AG04450 (cell line): ENCODE measurements at regions of chr17 and their contacts with region 1.

Region 1: DNA sequence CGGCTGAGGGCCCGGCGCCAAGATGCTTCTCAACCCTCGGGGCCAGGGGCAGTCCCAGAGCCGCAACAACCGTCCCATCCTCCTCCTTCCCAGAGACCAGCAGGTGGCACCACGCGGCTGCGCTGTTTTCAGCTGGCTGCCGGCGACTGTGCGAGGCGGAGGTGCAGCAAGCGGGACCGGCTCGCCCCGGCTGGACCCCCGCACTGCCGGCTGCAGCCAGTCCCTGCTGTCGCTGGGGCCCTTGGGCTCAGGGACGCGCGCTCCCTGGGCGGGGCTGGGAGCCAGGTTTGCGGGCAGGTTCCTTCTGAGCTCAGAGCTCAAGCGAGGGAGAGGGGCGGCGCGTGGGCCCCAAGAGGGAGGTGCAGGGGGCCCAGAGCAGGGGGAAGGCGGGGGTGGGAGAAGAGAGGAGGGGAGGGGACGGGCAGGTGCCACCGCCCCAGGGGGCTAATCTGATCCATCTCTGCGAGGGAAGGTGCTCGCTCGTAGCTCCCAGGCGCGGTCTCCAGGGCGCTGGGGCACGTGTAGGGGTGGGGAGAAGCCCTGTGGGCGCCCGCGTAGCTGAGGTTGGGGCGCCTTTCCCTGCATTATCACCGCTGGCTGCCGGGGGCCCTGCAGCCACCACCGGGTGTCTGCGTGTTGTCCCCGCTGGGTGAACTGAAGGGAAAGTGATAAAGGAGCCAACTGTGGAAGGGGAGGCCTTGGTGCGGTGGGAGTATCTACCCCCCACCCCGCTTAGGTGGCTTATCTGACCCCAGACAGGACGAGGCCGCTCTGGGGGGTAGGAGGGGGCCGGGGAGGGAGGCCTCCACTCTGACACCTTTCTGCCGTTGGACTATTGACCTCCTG is 24.2 kb downstream of the STAT5A start:
- DNase-seq: peak; percentile 55
- H3K4me3 ChIP-seq: no peak overlapping the region; the same call in 1 of the 2 replicates
- H3K27ac ChIP-seq: peak overlapping the region; percentile 81
- H3K27me3 ChIP-seq: no peaks in the 10 kb centered on the region
- CTCF ChIP-seq: peak; percentile 69

Region 2: DNA sequence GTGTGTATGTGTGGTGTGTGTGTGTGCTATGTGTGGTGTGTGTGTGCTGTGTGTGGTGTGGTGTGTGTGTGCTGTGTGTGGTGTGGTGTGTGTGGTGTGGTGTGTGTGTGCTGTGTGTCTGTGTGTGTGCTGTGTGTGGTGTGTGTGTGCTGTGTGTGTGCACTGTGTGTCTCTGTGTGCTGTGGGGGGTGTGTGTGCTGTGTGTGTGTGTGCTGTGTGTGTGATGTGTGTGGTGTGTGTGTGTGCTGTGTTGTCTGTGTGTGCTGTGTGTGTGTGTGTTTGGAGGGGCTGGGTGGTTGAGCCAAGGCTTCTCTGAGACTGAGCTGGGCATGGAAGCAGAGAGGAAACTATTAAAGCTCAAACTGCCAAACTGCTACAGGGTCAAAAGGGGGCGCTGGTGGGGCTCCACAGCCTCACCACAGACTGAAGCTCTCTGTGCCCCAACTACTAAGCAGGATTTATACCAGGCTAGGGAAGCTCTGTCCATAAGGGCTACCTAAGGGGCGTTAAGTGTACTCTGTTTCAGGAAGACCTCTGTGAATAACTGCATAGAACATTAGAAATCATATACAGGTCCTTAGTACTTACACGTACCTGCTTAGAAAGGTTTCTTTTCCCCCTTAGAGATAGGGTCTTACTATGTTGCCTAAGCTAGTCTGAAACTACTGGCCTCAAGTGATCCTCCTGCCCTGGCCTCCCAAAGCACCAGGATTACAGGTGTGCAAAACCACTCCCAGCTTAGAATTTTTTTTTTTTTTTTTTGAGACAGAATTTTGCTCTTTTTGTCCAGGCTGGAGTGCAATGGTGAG is 90.4 kb before region 1 on chr17:
- CTCF ChIA-PET with region 1: interaction called, 24 read pairs
- POLR2A ChIA-PET with region 1: interaction called, 4 read pairs
- DNase-seq: peak; percentile 13
- H3K4me3 ChIP-seq: no peak overlapping the region
- H3K27ac ChIP-seq: no peak overlapping the region
- H3K27me3 ChIP-seq: no peaks in the 10 kb centered on the region
- CTCF ChIP-seq: peak; percentile 80

Region 3: GRCh38 chr17:42294469-42295398 is 17.8 kb before region 1 on chr17:
- CTCF ChIA-PET with region 1: no interaction called
- POLR2A ChIA-PET with region 1: no interaction called
- DNase-seq: no peak
- H3K4me3 ChIP-seq: no peak overlapping the region
- H3K27ac ChIP-seq: no peak overlapping the region
- H3K27me3 ChIP-seq: no peaks in the 10 kb centered on the region
- CTCF ChIP-seq: no peak

Region 4: DNA sequence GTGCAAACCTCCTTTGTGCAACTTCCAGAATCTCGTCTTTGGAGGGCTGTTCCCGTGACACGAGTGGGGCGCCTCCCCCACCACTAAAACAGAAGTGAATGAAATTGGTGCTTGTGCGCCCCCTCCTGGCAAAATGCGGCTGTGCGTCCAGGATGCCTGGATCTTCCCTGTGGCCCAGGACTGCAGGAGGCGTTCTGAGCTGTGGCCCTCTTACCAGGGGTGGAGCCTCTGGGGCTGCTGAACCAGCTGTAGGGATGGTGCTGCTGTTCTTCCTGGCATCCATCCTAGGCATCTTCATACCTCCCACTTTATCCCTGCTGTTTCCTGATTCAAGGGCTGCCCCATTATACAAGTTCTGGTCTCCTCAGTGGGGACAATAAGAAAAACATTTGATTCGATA is 205.0 kb after region 1 on chr17:
- CTCF ChIA-PET with region 1: interaction called, 11 read pairs
- POLR2A ChIA-PET with region 1: interaction called, 8 read pairs
- DNase-seq: peak; percentile 87
- H3K4me3 ChIP-seq: no peak overlapping the region
- H3K27ac ChIP-seq: peak overlapping the region; percentile 100
- H3K27me3 ChIP-seq: no peaks in the 10 kb centered on the region
- CTCF ChIP-seq: peak; percentile 95

Region 5: GRCh38 chr17:42527273-42527703 is 214.8 kb after region 1 on chr17:
- CTCF ChIA-PET with region 1: interaction called, 11 read pairs
- POLR2A ChIA-PET with region 1: interaction called, 3 read pairs
- DNase-seq: peak; percentile 68
- H3K4me3 ChIP-seq: no peak overlapping the region
- H3K27ac ChIP-seq: peak overlapping the region; percentile 11
- H3K27me3 ChIP-seq: no peaks in the 10 kb centered on the region
- CTCF ChIP-seq: peak; percentile 92